PC-9 (cell line): ENCODE measurements at regions of chr9 and their contacts with region 1.

Region 1: DNA sequence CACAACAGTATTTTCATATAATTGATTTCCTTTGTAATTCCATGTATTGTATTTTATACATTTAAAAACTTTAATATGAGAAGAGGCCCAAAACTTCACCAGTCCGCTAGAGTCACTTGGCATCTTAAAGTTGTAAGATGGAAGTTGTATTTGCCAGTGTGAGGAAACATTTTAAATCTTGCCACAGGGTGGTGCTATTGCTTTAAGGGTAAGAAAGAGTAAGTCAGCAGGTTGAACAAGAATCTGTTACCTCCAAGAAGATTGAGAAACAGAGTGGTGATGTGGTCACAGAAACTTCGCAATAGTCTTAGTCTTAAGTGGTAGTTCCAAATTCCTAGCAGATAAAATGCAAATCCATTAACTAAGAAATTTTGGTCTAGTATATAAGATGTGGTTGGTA is 39.8 kb upstream of the RANBP6 start:
- DNase-seq: peak; percentile 44 to 81
- H3K4me3 ChIP-seq: no peak overlapping the region
- H3K27ac ChIP-seq: no peak overlapping the region
- H3K4me1 ChIP-seq: peaks cover 9% of the 10 kb centered on the region; the same call in 1 of the 2 replicates
- H3K27me3 ChIP-seq: no peaks in the 10 kb centered on the region
- CTCF ChIP-seq: peak; percentile 77

Region 2: GRCh38 chr9:5799314-5799713 is 255.9 kb before region 1 on chr9:
- CTCF ChIA-PET with region 1: interaction called, 4 read pairs
- POLR2A ChIA-PET with region 1: no interaction called
- intact Hi-C with region 1: loop called (anchors 1 kb)
- DNase-seq: peak; percentile 7 to 46
- H3K4me3 ChIP-seq: no peak overlapping the region
- H3K27ac ChIP-seq: peak overlapping the region; percentile 39
- H3K4me1 ChIP-seq: peaks cover 15% of the 10 kb centered on the region; the same call in 1 of the 2 replicates
- H3K27me3 ChIP-seq: no peaks in the 10 kb centered on the region
- CTCF ChIP-seq: peak; percentile 74

Region 3: GRCh38 chr9:5917888-5918287 is 137.3 kb before region 1 on chr9:
- CTCF ChIA-PET with region 1: interaction called, 10 read pairs
- POLR2A ChIA-PET with region 1: no interaction called
- intact Hi-C with region 1: no loop called
- DNase-seq: no peak
- H3K4me3 ChIP-seq: no peak overlapping the region
- H3K27ac ChIP-seq: no peak overlapping the region
- H3K4me1 ChIP-seq: no peaks in the 10 kb centered on the region
- H3K27me3 ChIP-seq: no peaks in the 10 kb centered on the region
- CTCF ChIP-seq: no peak

Region 4: DNA sequence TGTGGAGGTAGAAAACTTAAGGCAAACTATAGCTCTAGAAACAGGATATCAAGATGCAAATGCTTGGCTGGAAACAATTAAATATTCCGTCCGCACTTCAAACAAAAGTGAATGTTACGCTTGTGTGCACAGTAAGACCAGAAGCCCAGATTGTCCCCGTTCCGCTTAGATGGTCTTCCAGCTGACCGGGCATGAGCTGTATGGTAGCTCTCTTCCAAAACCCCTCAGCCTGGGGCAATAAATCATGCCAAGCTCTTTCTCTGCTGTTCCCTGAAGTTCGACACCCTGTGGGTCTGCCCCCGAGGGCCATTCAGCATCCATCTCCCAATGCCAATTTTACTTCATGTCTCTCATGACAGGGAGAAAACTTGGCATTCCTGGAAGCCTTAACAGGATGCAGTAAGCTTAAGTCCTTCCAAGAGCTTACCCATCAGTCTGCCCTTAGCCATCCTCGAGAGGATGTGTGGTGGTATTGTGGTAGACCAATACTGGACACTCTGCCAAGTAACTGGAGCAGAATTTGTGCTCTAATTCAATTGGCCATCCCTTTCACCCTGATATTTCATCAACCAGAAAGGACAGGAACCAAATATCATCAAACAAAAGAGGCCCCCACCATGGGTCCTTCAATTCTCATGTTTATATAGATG is 30.9 kb after region 1 on chr9:
- CTCF ChIA-PET with region 1: no interaction called
- POLR2A ChIA-PET with region 1: no interaction called
- intact Hi-C with region 1: no loop called
- DNase-seq: no peak
- H3K4me3 ChIP-seq: no peak overlapping the region
- H3K27ac ChIP-seq: no peak overlapping the region
- H3K4me1 ChIP-seq: no peaks in the 10 kb centered on the region
- H3K27me3 ChIP-seq: no peaks in the 10 kb centered on the region
- CTCF ChIP-seq: no peak

Region 5: GRCh38 chr9:6305954-6306563 is 250.8 kb after region 1 on chr9:
- CTCF ChIA-PET with region 1: interaction called, 13 read pairs
- POLR2A ChIA-PET with region 1: no interaction called
- intact Hi-C with region 1: no loop called
- DNase-seq: no peak
- H3K4me3 ChIP-seq: no peak overlapping the region
- H3K27ac ChIP-seq: no peak overlapping the region
- H3K4me1 ChIP-seq: peaks cover 14% of the 10 kb centered on the region
- H3K27me3 ChIP-seq: no peaks in the 10 kb centered on the region
- CTCF ChIP-seq: peak; percentile 64

Region 6: DNA sequence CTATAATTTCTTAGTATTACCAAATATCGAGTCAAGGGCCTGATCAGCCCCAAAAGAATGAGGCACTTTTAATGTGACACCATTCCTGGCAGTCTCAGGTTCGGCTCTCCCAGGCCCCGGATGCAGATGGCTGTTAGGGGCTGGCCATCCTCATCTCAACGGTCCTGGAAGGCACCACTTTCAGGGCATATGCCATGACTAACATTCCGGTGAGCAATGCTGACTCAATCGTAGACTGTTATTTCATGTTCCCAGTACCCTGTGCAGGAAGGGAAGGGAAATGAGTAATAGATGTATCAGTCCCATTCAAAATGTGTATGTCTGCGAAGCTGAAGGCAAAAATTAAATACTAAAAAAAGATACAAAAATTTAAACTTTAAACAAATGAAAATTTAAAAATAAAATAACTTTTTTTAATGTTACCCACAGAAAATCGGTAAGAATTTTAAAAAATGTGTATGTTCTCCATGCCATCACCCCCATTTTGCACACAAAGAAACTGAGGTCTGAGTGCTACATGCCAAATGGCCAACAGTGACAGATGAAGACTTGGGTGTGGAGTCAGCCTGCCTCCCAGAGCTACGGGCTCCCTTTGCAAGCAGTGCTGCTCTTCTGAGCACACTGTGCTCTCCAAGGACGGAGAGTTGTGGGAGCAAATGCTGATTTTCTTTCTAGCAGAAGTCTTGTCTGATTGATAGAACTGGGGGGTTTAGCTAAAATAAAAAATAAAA is 511.4 kb after region 1 on chr9:
- CTCF ChIA-PET with region 1: no interaction called
- POLR2A ChIA-PET with region 1: no interaction called
- intact Hi-C with region 1: loop called (anchors 10 kb)
- DNase-seq: peak; percentile 43 to 88
- H3K4me3 ChIP-seq: peak overlapping the region; percentile 33; the same call in 1 of the 2 replicates
- H3K27ac ChIP-seq: peak overlapping the region; percentile 100
- H3K4me1 ChIP-seq: peaks cover 34% of the 10 kb centered on the region
- H3K27me3 ChIP-seq: no peaks in the 10 kb centered on the region
- CTCF ChIP-seq: no peak